Activated naive CD4-positive, alpha-beta T cell treated with anti-CD3 and anti-CD28 coated beads for 36 hours (primary cell): ENCODE measurements at regions of chr2 and their contacts with region 1.

Region 1: DNA sequence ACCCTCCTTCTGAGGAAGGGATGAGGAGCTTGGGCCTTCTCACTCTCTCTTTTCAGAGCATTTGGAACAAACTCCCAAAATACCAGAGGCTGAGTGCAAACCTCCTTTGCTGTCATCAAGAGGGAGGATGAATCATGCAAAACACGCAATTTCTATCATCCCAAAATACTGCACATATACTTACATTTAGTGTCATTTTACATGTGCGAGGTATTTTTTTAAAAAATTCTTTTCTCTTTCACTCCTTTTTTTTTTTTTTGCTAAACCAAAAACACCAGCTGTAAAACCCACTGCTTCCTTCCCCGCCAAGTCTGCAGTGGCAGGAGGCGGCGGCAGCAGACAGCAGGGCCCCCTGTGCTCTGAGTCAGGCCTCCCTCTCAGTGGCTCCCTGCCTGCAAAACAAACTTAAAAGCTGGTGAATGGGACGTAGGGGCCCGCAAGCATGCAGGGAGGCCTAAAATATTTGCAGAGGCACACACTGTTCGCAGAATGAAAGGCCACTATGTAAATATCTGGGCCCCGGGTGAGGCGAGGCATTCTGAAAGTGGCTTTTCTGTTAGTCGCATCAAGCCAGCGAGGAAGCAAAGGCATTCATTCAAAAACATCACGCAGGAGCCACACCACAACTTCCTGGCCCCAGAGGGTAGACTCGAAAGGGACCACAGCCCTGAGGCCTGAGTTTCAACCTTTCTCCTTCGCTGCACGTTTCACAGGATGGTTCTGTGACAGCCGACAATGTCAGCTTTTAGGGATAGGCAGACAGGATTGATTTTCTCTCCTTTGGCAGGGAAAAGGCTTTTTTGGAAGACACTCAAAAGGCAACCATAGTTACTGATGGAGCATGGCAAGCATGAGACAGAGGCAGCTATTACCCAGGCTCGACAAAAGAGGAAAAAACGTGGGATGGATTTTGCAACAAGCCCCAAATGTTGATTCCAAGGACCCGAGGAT is 73.4 kb downstream of the ACTR2 start:
- DNase-seq: peak; percentile 85
- H3K4me3 Mint-ChIP-seq: peak overlapping the region; percentile 62
- H3K27ac Mint-ChIP-seq: peak overlapping the region; percentile 82
- H3K4me1 Mint-ChIP-seq: peaks cover 41% of the 10 kb centered on the region
- H3K27me3 Mint-ChIP-seq: no peaks in the 10 kb centered on the region

Region 2: DNA sequence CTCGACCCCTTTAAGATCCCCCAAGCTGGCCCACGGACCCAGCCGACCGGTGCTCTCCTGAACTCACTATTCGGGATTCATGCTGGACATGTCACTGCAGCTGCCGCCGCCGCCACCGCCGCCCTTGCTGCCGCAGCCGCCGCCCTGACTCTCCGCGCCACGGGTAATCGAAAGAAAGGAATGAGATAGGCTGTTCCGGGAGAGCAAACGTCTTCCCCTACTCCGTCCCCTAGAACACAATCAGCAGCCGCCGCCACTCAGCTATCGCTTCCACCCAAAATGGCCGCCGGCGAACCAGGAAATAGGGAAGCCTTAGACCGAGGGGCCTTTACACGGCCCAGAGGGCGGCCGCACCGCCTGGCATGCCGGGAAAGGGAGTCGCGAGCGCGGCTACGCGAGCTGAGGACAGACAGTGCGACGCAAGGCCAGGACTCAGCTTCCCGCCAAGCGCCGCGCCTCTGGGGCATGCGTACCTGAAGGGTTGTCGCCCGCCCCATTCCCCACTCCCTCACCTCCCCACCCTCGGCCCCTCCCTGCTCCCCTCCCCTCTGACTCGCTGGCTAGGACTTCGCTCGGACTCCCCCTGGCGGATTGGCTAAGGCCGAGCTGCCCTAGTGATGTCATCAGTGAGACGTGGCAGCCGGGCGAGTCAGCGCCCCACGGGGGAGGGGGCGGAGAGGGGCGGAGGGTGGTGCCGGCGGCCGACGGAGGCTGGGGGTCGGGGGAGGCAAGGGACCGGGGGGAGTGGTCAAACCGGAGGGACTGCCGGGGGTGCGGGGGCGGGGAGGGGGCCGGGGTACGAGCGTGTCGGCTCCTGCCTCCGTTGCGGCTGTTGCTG is 171.0 kb before region 1 on chr2 and contains the start of gene RAB1A:
- CTCF ChIA-PET with region 1: no interaction called
- intact Hi-C with region 1: loop called (anchors 1 kb)
- DNase-seq: peak; percentile 100
- H3K4me3 Mint-ChIP-seq: peak within 1 kb of the TSS; percentile 95
- H3K27ac Mint-ChIP-seq: peak within 1 kb of the TSS; percentile 94
- H3K4me1 Mint-ChIP-seq: peaks cover 35% of the 10 kb centered on the region
- H3K27me3 Mint-ChIP-seq: no peaks in the 10 kb centered on the region
- total RNA-seq, gene RAB1A: 60.8 to 61.3 TPM

Region 3: GRCh38 chr2:65264821-65265670 is 36.0 kb before region 1 on chr2:
- CTCF ChIA-PET with region 1: interaction called, 3 read pairs
- intact Hi-C with region 1: loop called (anchors 1 kb)
- DNase-seq: peak; percentile 27
- H3K4me3 Mint-ChIP-seq: no peak overlapping the region
- H3K27ac Mint-ChIP-seq: no peak overlapping the region
- H3K4me1 Mint-ChIP-seq: no peaks in the 10 kb centered on the region
- H3K27me3 Mint-ChIP-seq: no peaks in the 10 kb centered on the region

Region 4: DNA sequence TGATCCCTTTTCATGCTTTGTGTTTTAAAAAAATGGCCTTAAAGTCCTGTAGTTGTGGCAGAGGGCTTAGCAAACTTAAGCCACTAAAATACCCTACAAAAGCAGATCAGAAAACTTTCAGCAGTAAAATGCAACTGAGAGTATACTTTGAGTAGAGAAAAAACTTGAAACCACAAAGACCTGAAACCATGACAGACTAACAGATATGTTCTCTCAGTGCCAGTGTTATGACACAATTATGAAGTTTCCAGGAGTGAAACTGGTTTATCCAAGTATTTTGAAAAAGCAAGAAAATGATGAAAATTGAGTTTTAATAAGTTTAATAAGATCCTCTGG is 56.9 kb after region 1 on chr2:
- CTCF ChIA-PET with region 1: interaction called, 3 read pairs
- intact Hi-C with region 1: loop called (anchors 2 kb)
- DNase-seq: no peak
- H3K4me3 Mint-ChIP-seq: no peak overlapping the region
- H3K27ac Mint-ChIP-seq: no peak overlapping the region
- H3K4me1 Mint-ChIP-seq: peaks cover 22% of the 10 kb centered on the region
- H3K27me3 Mint-ChIP-seq: peaks cover 7% of the 10 kb centered on the region

Region 5: DNA sequence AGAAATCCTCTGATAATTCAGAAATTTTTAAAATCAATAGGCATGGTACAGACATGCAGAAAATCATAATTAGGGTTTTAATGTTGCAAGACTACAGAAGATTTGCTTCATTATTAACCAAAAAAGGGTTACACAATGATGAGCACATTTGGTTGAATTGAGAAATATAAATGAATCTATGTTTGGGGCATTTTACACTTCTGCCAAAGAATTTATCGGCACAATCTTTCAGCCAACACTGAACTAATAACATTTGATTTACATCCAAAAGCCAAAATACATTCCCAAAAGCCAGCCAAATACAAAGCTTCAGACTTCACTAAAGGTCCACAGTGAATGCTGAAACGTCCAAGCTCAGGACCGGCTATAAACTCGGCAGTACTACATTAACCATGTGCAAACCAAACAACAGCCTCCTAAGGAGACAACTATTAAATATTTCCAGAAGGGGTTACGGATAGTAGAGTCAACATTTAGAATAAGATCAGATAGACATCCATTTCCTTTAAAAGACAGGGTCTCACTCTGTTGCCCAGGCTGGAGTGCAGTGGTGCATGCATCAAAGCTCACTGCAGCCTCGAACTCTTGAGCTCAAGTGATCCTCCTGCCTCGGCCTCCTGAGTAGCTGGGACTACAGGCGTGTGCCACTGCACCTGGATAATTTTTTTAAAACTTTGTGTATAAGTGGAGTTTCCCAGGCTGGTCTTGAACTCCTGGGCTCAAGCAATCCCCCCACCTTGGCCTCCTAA is 101.9 kb after region 1 on chr2:
- CTCF ChIA-PET with region 1: no interaction called
- intact Hi-C with region 1: no loop called
- DNase-seq: no peak
- H3K4me3 Mint-ChIP-seq: no peak overlapping the region
- H3K27ac Mint-ChIP-seq: no peak overlapping the region
- H3K4me1 Mint-ChIP-seq: peaks cover 18% of the 10 kb centered on the region
- H3K27me3 Mint-ChIP-seq: peaks cover 6% of the 10 kb centered on the region

Region 6: GRCh38 chr2:65605743-65606058 is 304.7 kb after region 1 on chr2:
- CTCF ChIA-PET with region 1: no interaction called
- intact Hi-C with region 1: loop called (anchors 1 kb)
- DNase-seq: no peak
- H3K4me3 Mint-ChIP-seq: no peak overlapping the region
- H3K27ac Mint-ChIP-seq: peak overlapping the region; percentile 57
- H3K4me1 Mint-ChIP-seq: peaks cover 19% of the 10 kb centered on the region
- H3K27me3 Mint-ChIP-seq: no peaks in the 10 kb centered on the region